Activated T-helper 1 cell treated with anti-CD3 and anti-CD28 coated beads, Interleukin-12 subunit alpha, Interleukin-12 subunit beta, Interleukin-2, Interleukin-4 antibody, amounts not matched to agents 30 ng/mL and 10 ng/mL and 1 ng/mL, durations not matched to agents 14 hours and 24 hours and 36 hours (primary cell): ENCODE measurements at regions of chr3 and their contacts with region 1.

Region 1: GRCh38 chr3:45881078-45882022 is 5.0 kb upstream of the CCR9 start:
- DNase-seq: no peak
- H3K4me3 Mint-ChIP-seq: no peak overlapping the region
- H3K27ac Mint-ChIP-seq: peak overlapping the region; percentile 3
- H3K4me1 Mint-ChIP-seq: peaks cover 24% of the 10 kb centered on the region
- H3K27me3 Mint-ChIP-seq: peaks cover 42% of the 10 kb centered on the region

Region 2: DNA sequence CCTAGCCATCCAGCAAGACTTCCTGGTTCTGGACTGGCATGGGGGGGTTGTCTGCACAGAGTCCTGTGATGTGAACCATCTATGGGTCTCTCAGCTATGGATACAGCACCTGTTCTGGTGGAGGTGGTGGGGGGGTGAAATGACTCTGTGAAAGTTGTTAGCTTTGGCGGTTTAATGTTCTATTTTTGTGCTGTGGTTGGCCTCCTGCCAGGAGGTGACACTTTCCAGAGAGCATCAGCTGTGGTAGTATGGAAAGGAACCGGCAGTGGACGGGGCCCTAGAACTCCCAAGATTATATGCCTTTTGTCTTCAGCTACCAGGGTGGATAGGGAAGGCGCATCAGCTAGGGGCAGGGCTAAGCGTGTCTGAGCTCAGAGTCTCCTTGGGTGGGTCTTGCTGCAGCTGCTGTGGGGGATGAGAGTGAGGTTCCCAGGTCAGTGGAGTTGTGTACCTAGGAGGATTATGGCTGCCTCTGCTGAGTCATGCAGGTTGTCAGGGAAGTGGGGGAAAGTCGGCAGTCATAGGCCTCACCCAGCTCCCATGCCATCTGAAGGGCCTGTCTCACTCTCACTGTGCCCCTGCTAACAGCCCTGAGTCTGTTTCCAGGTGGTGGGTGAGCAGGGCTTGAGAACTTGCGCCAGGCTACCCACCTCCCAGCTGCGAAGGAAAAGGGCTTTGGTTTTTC is 500.0 kb before region 1 on chr3:
- intact Hi-C with region 1: no loop called
- DNase-seq: no peak
- H3K4me3 Mint-ChIP-seq: no peak overlapping the region
- H3K27ac Mint-ChIP-seq: peak overlapping the region; percentile 29
- H3K4me1 Mint-ChIP-seq: peaks cover 28% of the 10 kb centered on the region
- H3K27me3 Mint-ChIP-seq: peaks cover 16% of the 10 kb centered on the region

Region 3: DNA sequence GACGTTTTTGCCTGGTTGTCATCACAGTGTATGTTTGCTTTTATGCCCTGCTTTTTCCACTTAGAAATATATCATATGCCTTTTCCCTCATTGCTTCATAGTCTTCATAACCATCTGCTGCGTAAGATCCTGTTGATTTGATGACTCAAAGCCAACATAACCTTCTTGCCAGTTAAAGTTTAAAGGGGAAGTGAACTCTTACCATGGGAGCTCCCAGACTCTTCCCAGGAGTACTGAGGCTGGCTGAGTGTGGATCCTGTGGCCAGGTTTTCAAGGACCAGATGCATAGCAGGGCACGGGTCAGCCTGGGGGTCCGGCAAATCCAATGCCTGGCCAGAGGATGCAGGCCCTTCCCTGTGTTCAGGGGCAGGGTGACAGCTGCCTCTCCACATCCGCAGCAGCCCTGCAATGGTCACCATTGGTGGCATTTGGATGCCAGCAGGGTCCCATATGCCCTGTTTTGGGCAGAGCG is 234.2 kb before region 1 on chr3:
- intact Hi-C with region 1: no loop called
- DNase-seq: no peak
- H3K4me3 Mint-ChIP-seq: no peak overlapping the region
- H3K27ac Mint-ChIP-seq: no peak overlapping the region
- H3K4me1 Mint-ChIP-seq: peaks cover 5% of the 10 kb centered on the region
- H3K27me3 Mint-ChIP-seq: no peaks in the 10 kb centered on the region

Region 4: DNA sequence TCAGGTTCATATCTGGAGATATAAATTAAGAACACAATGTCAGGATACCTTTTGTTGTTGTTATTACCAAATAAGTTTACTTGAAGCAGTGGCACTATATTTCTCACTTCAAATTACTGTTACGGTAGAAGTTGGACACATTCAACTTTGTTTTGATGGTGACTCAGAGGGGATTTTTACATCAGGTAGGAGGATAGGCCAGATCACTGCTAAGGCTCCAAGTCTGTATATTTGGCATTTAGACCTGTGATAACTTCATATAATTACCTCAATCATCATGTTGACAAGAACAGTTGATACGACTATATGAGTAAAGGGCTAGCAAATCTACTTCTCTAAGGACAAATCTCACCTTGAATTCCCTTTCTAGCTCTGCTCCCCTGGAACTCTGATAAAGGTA is 55.0 kb before region 1 on chr3:
- intact Hi-C with region 1: loop called (anchors 2 kb)
- DNase-seq: no peak
- H3K4me3 Mint-ChIP-seq: no peak overlapping the region
- H3K27ac Mint-ChIP-seq: no peak overlapping the region
- H3K4me1 Mint-ChIP-seq: peaks cover 11% of the 10 kb centered on the region
- H3K27me3 Mint-ChIP-seq: peaks cover 3% of the 10 kb centered on the region

Region 5: GRCh38 chr3:45870099-45870498 is 11.3 kb before region 1 on chr3:
- intact Hi-C with region 1: loop called (anchors 1 kb)
- DNase-seq: peak; percentile 27
- H3K4me3 Mint-ChIP-seq: no peak overlapping the region
- H3K27ac Mint-ChIP-seq: no peak overlapping the region
- H3K4me1 Mint-ChIP-seq: peaks cover 28% of the 10 kb centered on the region
- H3K27me3 Mint-ChIP-seq: peaks cover 41% of the 10 kb centered on the region

Region 6: GRCh38 chr3:45896956-45897355 is 15.6 kb after region 1 on chr3:
- intact Hi-C with region 1: no loop called
- DNase-seq: no peak
- H3K4me3 Mint-ChIP-seq: no peak overlapping the region
- H3K27ac Mint-ChIP-seq: no peak overlapping the region
- H3K4me1 Mint-ChIP-seq: peaks cover 8% of the 10 kb centered on the region
- H3K27me3 Mint-ChIP-seq: peaks cover 46% of the 10 kb centered on the region

Region 7: DNA sequence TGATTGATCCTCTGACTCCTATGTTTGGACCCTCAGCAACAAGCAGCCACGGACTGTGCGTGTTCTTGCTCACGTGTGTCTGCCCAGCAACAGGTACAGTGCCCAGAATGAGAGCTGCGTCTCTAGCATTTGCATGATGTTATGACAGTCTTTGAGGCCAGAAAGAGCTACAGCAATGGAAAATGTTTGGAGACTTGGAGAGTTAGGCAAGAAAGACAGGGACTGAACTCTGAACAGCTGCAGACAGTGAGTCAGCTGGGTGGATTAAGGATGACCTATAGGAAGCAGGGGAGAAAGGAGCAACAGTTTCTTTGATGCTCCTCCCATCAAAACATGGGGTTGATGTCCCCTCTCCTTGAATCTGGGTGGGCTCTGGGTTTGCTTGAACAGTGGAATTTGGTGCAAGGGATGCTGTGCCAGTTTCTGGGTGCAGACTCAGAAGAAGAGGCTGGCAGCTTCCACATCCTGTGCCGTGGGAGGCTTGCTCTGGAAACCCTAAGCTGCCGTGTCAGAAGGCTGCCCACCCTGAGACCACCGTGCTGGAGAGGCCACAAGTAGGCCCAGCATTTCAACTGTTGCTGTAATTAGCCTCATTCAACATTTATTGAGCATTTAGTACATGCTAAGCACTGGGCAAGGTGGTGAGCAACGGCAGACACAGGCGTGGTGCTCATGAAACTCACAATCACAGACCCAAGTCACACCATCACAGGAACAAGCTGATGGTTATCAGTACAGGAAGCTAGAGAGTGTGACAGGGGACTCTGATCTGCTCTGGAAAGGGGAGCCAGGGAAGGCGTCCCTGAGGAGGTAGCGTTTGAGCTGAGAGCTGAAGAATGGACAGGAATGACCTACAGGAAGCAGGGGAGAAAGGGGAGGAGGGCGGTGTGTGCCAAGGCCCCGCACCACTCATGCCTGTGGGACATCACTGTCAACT is 26.7 kb after region 1 on chr3:
- intact Hi-C with region 1: loop called (anchors 1 kb)
- DNase-seq: peak; percentile 19
- H3K4me3 Mint-ChIP-seq: no peak overlapping the region
- H3K27ac Mint-ChIP-seq: no peak overlapping the region
- H3K4me1 Mint-ChIP-seq: peaks cover 24% of the 10 kb centered on the region
- H3K27me3 Mint-ChIP-seq: peaks cover 34% of the 10 kb centered on the region